ENCODE measurements at regions of chr6 and their contacts with region 1.

Region 1: DNA sequence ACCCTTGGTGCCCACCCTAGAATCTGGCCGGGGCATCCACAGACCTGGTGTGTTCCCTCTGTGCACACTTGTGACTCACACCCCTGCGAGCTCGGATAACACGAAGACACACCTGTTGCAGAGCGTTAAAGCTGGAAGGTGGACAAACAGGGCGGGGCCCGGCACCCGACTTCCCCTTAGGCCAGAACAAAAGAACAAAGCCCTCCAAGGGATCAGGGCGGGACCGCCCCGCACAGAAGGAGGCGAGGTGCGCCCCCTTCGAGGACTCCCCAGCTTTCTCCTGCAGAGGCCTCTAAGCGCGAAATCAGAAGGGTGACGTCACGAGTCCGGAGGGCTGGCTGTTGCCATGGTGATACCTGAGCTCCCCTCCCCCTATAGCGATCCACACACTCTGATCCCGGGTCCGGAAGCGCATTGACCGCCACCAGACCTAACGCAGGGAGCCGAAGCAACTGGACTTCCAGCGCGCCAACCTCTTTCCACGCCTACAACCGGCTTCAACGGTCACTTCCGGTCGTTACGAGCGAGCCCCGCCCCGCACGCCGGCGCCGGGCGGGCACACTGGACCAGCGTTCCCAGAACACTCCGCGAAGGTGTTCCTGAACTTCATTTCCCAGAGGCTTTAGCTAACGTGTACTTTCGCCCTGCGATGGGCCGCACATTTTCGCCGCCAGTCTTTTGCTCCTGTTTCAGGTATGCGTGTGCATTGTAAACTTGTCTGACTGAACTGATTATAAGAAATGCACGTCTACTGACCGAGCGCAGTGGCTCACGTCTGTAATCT is at the start of gene ZNF184:
- DNase-seq: peak; percentile 98
- H3K4me3 Mint-ChIP-seq: peak within 1 kb of the TSS; percentile 91
- H3K27ac Mint-ChIP-seq: peak within 1 kb of the TSS; percentile 83
- H3K4me1 Mint-ChIP-seq: peaks cover 25% of the 10 kb centered on the region
- H3K27me3 Mint-ChIP-seq: no peaks in the 10 kb centered on the region
- CTCF ChIP-seq: peak; percentile 17
- total RNA-seq, gene ZNF184: 8.9 and 10.1 TPM in 2 replicates

Region 2: DNA sequence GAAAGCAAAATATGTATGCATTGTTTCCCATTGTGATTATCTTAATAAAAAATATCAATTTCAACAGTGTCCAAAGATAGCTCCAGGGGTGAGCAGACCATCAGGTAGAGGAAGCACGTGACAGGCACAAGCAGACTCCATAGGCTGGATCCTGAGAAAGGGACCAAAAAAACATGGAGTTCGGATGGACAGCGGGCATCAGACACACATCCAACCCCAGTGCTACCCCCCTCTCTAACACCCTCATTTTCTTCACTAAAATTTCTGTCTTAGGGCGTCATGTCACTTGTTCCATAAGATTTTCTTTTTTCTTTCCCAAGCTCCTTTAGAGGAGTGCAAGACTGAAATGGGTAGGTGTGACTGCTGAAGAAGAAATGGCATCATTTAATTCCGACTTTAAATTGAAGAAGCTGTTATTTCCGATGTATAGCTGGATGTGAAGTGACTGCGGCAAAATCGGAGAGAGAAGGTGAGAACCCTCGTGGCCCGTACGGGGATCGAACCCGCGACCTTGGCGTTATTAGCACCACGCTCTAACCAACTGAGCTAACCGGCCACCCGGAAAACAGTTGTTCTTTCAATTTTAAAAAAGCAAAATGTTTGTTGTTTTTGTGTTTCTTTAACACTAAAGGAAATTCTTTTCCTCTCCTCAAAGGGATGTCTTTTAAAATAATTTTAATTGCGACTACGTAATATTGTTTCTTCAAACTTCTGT is 235.6 kb before region 1 on chr6:
- CTCF ChIA-PET with region 1: no interaction called
- POLR2A ChIA-PET with region 1: no interaction called
- intact Hi-C with region 1: loop called (anchors 10 kb)
- DNase-seq: peak; percentile 52
- H3K4me3 Mint-ChIP-seq: peak overlapping the region; percentile 75
- H3K27ac Mint-ChIP-seq: peak overlapping the region; percentile 51
- H3K4me1 Mint-ChIP-seq: peaks cover 13% of the 10 kb centered on the region
- H3K27me3 Mint-ChIP-seq: no peaks in the 10 kb centered on the region
- CTCF ChIP-seq: no peak

Region 3: DNA sequence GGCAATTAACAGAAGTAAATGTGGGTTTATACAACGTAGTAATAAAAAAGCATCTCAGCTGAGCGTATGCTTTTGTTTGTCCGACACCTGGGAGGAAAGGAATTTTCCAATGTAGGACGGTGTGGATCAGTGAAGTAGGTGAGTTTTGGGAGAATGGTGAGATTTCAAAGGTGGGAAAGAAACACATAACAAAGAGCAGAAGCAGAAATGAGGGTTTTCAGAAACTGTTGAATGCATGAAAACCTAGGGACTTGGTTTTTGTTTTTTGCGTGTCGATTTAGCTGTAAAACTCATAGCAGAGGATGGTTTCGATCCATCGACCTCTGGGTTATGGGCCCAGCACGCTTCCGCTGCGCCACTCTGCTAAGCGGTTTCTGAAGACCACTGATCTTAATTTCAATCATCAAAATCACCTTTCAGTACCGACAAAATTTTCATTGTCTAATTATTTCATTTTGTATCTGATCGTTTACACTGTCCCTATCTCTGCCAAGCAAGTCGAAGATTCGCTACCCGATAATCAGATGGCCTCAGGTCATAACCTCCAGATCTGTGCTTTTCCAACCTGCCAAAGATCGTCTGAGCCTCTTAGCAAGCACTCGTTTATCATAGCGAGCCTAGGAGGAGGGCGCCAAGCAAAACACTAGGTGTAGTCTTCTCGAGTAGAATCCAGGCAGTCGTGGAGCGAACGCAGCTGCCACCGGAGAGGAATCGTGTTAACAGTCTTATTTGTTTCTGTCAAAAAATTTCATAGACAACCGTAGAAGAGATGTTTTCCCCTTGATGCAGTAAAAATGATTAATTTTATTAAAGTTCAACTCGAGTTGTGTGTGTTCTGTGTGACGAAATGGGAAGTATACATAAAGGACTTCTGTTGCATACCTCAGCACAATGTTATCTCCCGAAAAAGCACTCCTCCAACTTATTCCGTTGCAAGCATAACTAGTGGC is 139.8 kb before region 1 on chr6:
- CTCF ChIA-PET with region 1: no interaction called
- POLR2A ChIA-PET with region 1: interaction called, 14 read pairs
- intact Hi-C with region 1: no loop called
- DNase-seq: peak; percentile 84
- H3K4me3 Mint-ChIP-seq: peak overlapping the region; percentile 78
- H3K27ac Mint-ChIP-seq: peak overlapping the region; percentile 27
- H3K4me1 Mint-ChIP-seq: peaks cover 18% of the 10 kb centered on the region
- H3K27me3 Mint-ChIP-seq: no peaks in the 10 kb centered on the region
- CTCF ChIP-seq: no peak

Region 4: GRCh38 chr6:27503436-27504030 is 30.7 kb after region 1 on chr6:
- CTCF ChIA-PET with region 1: no interaction called
- POLR2A ChIA-PET with region 1: interaction called, 10 read pairs
- intact Hi-C with region 1: loop called (anchors 2 kb)
- DNase-seq: peak; percentile 74
- H3K4me3 Mint-ChIP-seq: peak overlapping the region; percentile 83
- H3K27ac Mint-ChIP-seq: peak overlapping the region; percentile 84
- H3K4me1 Mint-ChIP-seq: peaks cover 11% of the 10 kb centered on the region
- H3K27me3 Mint-ChIP-seq: no peaks in the 10 kb centered on the region
- CTCF ChIP-seq: no peak

Region 5: GRCh38 chr6:27617700-27618689 is 145.2 kb after region 1 on chr6:
- CTCF ChIA-PET with region 1: no interaction called
- POLR2A ChIA-PET with region 1: interaction called, 16 read pairs
- intact Hi-C with region 1: no loop called
- DNase-seq: peak; percentile 68
- H3K4me3 Mint-ChIP-seq: peak overlapping the region; percentile 89
- H3K27ac Mint-ChIP-seq: peak overlapping the region; percentile 86
- H3K4me1 Mint-ChIP-seq: peaks cover 6% of the 10 kb centered on the region
- H3K27me3 Mint-ChIP-seq: no peaks in the 10 kb centered on the region
- CTCF ChIP-seq: peak; percentile 9

Measured in MCF 10A (cell line).